ENCODE measurements at regions of chr7 and their contacts with region 1.

Region 1: DNA sequence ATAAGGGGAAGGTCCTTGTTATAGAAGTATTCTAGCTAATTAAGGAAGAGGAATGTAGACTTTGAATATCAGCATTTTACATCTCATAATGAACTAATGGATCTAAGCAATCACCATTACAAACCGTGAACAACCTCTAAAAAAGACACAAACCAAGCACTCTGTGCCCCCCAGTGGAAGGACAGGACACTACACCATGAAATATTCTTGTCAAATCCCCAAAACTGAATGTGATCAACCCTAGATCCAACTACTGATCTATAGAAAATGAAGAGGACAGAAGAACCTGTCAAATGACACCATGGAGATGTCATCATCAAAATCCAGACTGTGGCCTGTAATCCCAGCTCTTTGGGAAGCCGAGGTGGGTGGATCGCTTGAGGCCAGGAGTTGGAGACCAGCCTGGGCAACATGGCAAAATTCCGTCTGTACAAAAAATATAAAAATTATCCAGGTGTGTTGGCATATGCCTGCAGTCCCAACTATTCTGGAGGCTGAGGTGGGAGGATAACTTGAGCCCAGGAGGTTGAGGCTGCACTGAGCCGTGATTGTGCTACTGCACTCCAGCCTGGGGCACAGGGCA is 111.3 kb upstream of the CARD11 start:
- DNase-seq: peak in 8 of 9 donors; percentile 43 to 73 (median 66)
- ATAC-seq: peak; percentile 88
- H3K4me3 ChIP-seq: no peak overlapping the region
- H3K4me3 Mint-ChIP-seq: no peak overlapping the region
- H3K27ac ChIP-seq: no peak overlapping the region
- H3K27ac Mint-ChIP-seq: peak overlapping the region in 5 of 9 donors; percentile 5 to 48 (median 12)
- H3K4me1 ChIP-seq: no peaks in the 10 kb centered on the region
- H3K4me1 Mint-ChIP-seq: peaks cover 6 to 20% (median 14%) of the 10 kb centered on the region in 7 donors
- H3K27me3 ChIP-seq: no peaks in the 10 kb centered on the region
- H3K27me3 Mint-ChIP-seq: no peaks in the 10 kb centered on the region

Region 2: DNA sequence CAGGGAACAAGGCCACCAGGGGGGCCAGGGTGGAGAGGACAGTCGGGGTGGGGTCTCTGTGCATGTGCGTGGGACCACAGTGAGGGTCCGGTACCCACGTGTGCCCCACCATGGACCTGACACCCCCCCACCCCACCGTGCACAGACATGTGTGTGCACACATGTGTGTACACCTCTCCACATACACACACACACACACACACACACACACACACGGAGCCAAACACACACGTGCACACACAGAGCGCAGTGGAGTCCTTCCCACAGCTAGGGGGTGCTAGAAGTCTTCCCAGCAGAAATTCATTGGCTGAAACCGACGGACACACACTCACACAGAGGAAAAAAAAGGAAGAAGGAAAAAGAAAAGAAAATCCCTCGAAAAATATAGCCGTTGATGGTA is 268.1 kb before region 1 on chr7:
- CTCF ChIA-PET with region 1: interaction called, 13 read pairs
- POLR2A ChIA-PET with region 1: no interaction called
- intact Hi-C with region 1: loop called (anchors 1 kb)
- DNase-seq: peak in 8 of 9 donors; percentile 28 to 59 (median 50)
- ATAC-seq: peak; percentile 89
- H3K4me3 ChIP-seq: no peak overlapping the region
- H3K4me3 Mint-ChIP-seq: peak overlapping the region in 4 of 10 donors; percentile 16 to 38 (median 36)
- H3K27ac ChIP-seq: no peak overlapping the region
- H3K27ac Mint-ChIP-seq: peak overlapping the region in 4 of 9 donors; percentile 3 to 57 (median 24)
- H3K4me1 ChIP-seq: no peaks in the 10 kb centered on the region
- H3K4me1 Mint-ChIP-seq: peaks cover 0 to 9% (median 6%) of the 10 kb centered on the region in 7 donors
- H3K27me3 ChIP-seq: no peaks in the 10 kb centered on the region
- H3K27me3 Mint-ChIP-seq: no peaks in the 10 kb centered on the region

Region 3: DNA sequence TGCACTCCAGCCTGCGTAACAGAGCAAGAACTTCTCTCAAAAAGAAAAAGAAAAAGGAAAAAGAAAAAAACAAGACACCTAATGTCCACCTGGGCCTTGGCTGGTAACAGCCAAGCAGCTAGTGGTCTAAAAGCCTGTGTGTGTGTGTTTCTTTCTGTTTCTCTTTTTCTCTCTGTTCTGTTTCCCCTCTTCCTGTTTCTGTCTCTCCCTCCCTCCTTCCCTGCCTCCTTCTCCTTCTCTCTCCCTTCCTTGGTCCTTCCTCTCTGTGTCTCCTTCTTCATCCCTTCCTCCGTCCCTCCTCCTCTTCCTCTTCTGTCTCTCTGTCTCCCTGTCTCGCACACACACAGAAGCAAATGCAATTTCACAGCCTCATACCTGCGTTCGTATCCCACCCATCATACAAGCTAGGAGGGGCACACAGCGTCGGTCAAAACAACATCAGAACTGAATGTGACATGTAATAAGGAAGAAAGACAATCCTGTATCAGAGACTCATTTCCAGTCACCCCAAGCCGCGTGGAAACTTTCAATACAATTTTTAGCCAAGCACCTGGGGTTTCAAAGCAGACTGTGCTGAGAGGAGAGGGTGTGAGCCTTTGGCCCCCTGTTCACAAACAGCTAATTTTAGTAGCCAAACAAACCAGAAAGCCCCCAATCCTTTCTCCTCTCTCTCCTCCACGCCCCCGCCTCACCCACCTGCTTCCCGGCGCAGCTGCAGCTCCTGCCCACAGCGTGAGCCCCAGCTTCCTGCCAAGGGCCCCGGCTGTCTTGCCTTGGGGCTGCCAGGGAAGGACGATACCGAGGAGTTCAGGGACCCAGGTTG is 260.7 kb before region 1 on chr7:
- CTCF ChIA-PET with region 1: interaction called, 3 read pairs
- POLR2A ChIA-PET with region 1: no interaction called
- intact Hi-C with region 1: loop called (anchors 2 kb)
- DNase-seq: peak in 7 of 9 donors; percentile 30 to 74 (median 41)
- ATAC-seq: peak; percentile 72
- H3K4me3 ChIP-seq: peak overlapping the region; percentile 54
- H3K4me3 Mint-ChIP-seq: peak overlapping the region; percentile 75 to 93 (median 82)
- H3K27ac ChIP-seq: peak overlapping the region; percentile 42
- H3K27ac Mint-ChIP-seq: peak overlapping the region; percentile 0 to 92 (median 70)
- H3K4me1 ChIP-seq: peaks cover 10 to 11% of the 10 kb centered on the region in 2 donors
- H3K4me1 Mint-ChIP-seq: peaks cover 9 to 29% (median 21%) of the 10 kb centered on the region in 7 donors
- H3K27me3 ChIP-seq: no peaks in the 10 kb centered on the region
- H3K27me3 Mint-ChIP-seq: no peaks in the 10 kb centered on the region

Region 4: GRCh38 chr7:2956526-2957368 is 198.3 kb before region 1 on chr7:
- CTCF ChIA-PET with region 1: interaction called, 3 read pairs
- POLR2A ChIA-PET with region 1: interaction called, 3 read pairs
- intact Hi-C with region 1: loop called (anchors 5 to 10 kb)
- DNase-seq: peak in 1 of 9 donors; percentile 42
- ATAC-seq: peak; percentile 39
- H3K4me3 ChIP-seq: no peak overlapping the region
- H3K4me3 Mint-ChIP-seq: peak overlapping the region in 1 of 10 donors; percentile 41
- H3K27ac ChIP-seq: peak overlapping the region; percentile 14
- H3K27ac Mint-ChIP-seq: peak overlapping the region in 5 of 9 donors; percentile 24 to 85 (median 81)
- H3K4me1 ChIP-seq: peaks cover 29 to 37% of the 10 kb centered on the region in 2 donors
- H3K4me1 Mint-ChIP-seq: peaks cover 30 to 82% (median 70%) of the 10 kb centered on the region in 7 donors
- H3K27me3 ChIP-seq: no peaks in the 10 kb centered on the region
- H3K27me3 Mint-ChIP-seq: no peaks in the 10 kb centered on the region

Region 5: DNA sequence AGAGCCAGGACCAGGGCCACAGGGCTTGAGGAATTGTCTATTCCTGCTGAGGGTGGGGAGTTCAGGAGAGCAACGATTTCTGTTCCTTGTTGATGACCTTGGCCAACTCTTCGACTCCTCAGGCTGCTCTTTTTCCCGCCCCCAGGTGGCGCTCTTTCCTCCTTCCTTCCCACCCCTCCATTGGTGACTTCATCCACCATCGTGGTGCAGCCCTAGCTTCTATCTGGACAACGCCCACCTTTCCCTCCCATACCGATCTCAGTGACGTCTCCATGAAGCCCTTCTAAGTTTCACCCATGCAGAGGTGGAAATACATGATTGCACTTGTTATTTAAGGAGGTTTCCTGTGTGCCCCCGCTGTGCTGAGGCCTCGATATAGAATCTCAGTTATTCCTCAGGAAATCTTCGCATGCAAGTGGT is 89.3 kb before region 1 on chr7:
- CTCF ChIA-PET with region 1: interaction called, 36 read pairs
- POLR2A ChIA-PET with region 1: no interaction called
- intact Hi-C with region 1: loop called (anchors 1 kb)
- DNase-seq: peak; percentile 32 to 61 (median 50)
- ATAC-seq: peak; percentile 58
- H3K4me3 ChIP-seq: peak overlapping the region; percentile 28
- H3K4me3 Mint-ChIP-seq: peak overlapping the region; percentile 56 to 85 (median 72)
- H3K27ac ChIP-seq: peak overlapping the region; percentile 54
- H3K27ac Mint-ChIP-seq: peak overlapping the region; percentile 68 to 98 (median 91)
- H3K4me1 ChIP-seq: peaks cover 63 to 78% of the 10 kb centered on the region in 2 donors
- H3K4me1 Mint-ChIP-seq: peaks cover 65 to 83% (median 80%) of the 10 kb centered on the region in 7 donors
- H3K27me3 ChIP-seq: no peaks in the 10 kb centered on the region
- H3K27me3 Mint-ChIP-seq: no peaks in the 10 kb centered on the region

Region 6: DNA sequence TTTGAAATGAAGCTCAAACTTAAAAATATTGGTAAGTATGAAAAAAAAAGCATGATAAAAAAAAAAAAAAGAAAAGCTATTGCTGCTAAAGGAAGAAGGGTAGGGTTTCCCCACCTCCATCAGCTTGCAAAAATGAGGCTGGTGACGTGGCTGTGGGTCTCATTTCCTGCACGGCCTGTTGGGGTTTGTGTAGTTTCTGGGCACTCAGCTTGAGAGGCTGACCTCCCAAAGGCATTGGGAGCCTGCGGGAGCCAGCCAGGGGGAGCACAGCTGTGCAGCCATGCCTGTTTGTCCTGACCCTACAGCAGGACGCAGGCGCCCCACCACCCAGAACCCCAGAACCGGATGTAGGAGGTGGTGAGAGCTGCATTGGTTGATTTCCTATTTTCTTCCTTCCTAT is 62.5 kb before region 1 on chr7:
- CTCF ChIA-PET with region 1: interaction called, 5 read pairs
- POLR2A ChIA-PET with region 1: interaction called, 5 read pairs
- intact Hi-C with region 1: loop called (anchors 1 to 2 kb)
- DNase-seq: peak; percentile 35 to 87 (median 82)
- ATAC-seq: peak; percentile 87
- H3K4me3 ChIP-seq: peak overlapping the region; percentile 4
- H3K4me3 Mint-ChIP-seq: peak overlapping the region; percentile 43 to 94 (median 72)
- H3K27ac ChIP-seq: peak overlapping the region; percentile 81
- H3K27ac Mint-ChIP-seq: peak overlapping the region; percentile 93 to 100 (median 99)
- H3K4me1 ChIP-seq: peaks cover 68 to 76% of the 10 kb centered on the region in 2 donors
- H3K4me1 Mint-ChIP-seq: peaks cover 35 to 86% (median 72%) of the 10 kb centered on the region in 7 donors
- H3K27me3 ChIP-seq: no peaks in the 10 kb centered on the region
- H3K27me3 Mint-ChIP-seq: peaks cover 0 to 2% (median 0%) of the 10 kb centered on the region in 5 donors

Region 7: DNA sequence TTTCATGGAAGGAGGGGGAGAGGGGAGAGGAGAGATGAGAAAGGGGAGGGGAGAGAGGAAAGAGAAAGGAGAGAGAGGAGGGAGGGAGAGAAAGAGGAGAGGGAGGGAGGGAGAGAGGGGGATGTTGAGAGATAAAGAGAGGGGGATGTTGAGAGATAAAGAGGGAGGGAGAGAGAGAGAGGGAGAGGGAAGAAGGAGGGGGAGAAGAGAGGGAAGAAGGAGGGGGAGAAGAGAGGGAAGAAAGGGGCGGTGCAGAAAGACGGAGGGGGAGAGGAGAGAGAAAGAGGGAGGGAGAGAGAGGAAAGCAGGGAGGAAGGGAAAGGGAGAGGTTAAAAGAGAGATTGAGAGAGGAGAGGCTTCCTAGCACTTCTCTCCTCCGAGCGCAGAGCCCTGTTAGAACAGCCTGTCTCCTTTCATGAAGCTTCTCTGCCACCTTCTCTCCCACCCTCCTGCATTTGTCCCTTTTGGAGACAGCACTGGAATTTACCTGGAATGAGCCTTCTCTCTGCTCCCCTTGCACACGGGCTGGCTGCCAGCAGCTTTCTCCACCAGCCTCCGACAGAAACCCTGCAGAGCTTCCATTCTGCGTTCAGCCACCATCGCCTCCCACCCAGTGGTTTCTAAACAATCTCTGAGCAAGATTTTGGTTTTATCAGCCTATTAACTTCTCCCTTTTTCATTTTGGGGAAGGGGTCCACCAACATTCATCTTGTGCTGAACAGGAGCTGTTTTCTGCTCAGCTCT is 37.3 kb before region 1 on chr7:
- CTCF ChIA-PET with region 1: interaction called, 3 read pairs
- POLR2A ChIA-PET with region 1: no interaction called
- intact Hi-C with region 1: loop called in 1 of 2 experiments (anchors 1 kb)
- DNase-seq: peak in 6 of 9 donors; percentile 15 to 49 (median 30)
- ATAC-seq: peak; percentile 64
- H3K4me3 ChIP-seq: peak overlapping the region; percentile 28
- H3K4me3 Mint-ChIP-seq: peak overlapping the region in 9 of 10 donors; percentile 75 to 91 (median 84)
- H3K27ac ChIP-seq: peak overlapping the region; percentile 43
- H3K27ac Mint-ChIP-seq: peak overlapping the region in 7 of 9 donors; percentile 72 to 96 (median 92)
- H3K4me1 ChIP-seq: peaks cover 20 to 47% of the 10 kb centered on the region in 2 donors
- H3K4me1 Mint-ChIP-seq: peaks cover 36 to 63% (median 59%) of the 10 kb centered on the region in 7 donors
- H3K27me3 ChIP-seq: no peaks in the 10 kb centered on the region
- H3K27me3 Mint-ChIP-seq: no peaks in the 10 kb centered on the region

Region 8: DNA sequence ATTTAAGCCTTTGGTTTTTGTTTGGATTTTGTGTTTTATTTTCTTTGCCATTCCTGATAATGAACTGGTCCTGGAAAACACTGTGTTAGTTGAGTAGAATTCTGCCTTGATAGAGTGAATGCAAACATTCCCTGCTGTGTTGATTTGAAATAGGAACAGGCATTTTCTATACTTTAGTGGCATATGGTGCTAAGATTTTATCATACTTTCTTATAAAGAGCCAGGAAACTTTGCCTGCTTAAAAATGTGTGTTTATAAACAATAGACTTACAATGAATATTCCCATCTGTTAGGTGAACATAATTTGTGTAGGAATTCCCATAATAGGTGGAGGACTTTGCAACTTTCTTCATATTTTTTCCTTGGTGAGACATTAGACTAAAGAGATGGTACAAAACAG is 479.4 kb after region 1 on chr7:
- CTCF ChIA-PET with region 1: no interaction called
- POLR2A ChIA-PET with region 1: no interaction called
- intact Hi-C with region 1: no loop called
- DNase-seq: no peak
- ATAC-seq: no peak
- H3K4me3 ChIP-seq: no peak overlapping the region
- H3K4me3 Mint-ChIP-seq: no peak overlapping the region
- H3K27ac ChIP-seq: no peak overlapping the region
- H3K27ac Mint-ChIP-seq: no peak overlapping the region
- H3K4me1 ChIP-seq: no peaks in the 10 kb centered on the region
- H3K4me1 Mint-ChIP-seq: no peaks in the 10 kb centered on the region
- H3K27me3 ChIP-seq: no peaks in the 10 kb centered on the region
- H3K27me3 Mint-ChIP-seq: peaks cover 0 to 5% (median 0%) of the 10 kb centered on the region in 5 donors

Region 9: GRCh38 chr7:4085937-4086691 is 931.1 kb after region 1 on chr7:
- CTCF ChIA-PET with region 1: no interaction called
- POLR2A ChIA-PET with region 1: no interaction called
- intact Hi-C with region 1: no loop called
- DNase-seq: peak in 1 of 9 donors; percentile 0
- ATAC-seq: no peak
- H3K4me3 ChIP-seq: no peak overlapping the region
- H3K4me3 Mint-ChIP-seq: peak overlapping the region in 6 of 10 donors; percentile 8 to 61 (median 44)
- H3K27ac ChIP-seq: no peak overlapping the region
- H3K27ac Mint-ChIP-seq: peak overlapping the region in 5 of 9 donors; percentile 1 to 71 (median 34)
- H3K4me1 ChIP-seq: no peaks in the 10 kb centered on the region
- H3K4me1 Mint-ChIP-seq: peaks cover 0 to 11% (median 6%) of the 10 kb centered on the region in 7 donors
- H3K27me3 ChIP-seq: no peaks in the 10 kb centered on the region
- H3K27me3 Mint-ChIP-seq: peaks cover 0 to 6% (median 0%) of the 10 kb centered on the region in 5 donors